GM10248 (cell line): ENCODE measurements at regions of chr10 and their contacts with region 1.

Region 1: GRCh38 chr10:73159038-73159648 is 8.7 kb downstream of the ECD start:
- DNase-seq: peak; percentile 60
- CTCF ChIP-seq: peak; percentile 66

Region 2: GRCh38 chr10:72935361-72935760 is 223.8 kb before region 1 on chr10:
- CTCF ChIA-PET with region 1: no interaction called
- POLR2A ChIA-PET with region 1: no interaction called
- DNase-seq: no peak
- CTCF ChIP-seq: no peak

Region 3: DNA sequence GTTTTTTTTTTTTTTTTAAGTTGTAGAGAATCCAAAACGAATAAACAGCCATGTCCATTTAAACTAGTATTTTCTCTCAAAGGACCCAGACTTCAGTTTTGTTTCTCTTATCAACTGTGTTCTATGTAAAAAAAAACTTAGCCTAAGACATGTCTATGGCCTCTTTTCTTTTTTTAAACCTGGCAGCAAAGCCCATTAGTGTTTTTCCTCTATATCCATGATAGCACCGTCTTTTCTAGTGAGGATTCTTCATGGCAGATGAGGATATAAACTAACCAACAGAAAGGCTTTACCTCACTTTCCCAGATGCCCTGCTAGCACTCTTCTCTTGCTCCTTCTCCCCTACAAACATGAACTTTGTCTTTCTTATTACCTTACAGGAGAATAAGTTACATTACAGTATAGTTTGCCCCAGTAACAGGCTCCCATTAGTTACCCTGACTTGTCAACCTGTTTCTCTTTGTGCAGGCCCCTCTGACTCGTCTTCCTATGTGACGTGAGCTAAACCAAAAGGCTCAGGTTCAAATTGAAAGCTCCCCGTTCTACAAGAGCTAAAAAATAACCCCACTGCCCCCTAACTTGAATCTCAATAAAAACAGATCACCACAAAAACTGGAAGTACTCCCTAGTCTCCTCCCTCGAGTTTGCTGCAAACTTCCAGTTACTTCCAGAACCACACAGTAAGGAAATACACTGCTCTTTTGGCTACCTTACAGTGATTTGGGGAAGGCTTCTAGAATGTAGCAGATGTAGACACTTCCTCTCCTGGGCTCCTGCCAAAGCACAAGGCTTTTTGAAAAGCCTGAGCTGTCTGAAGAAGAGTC is 82.6 kb before region 1 on chr10:
- CTCF ChIA-PET with region 1: interaction called, 15 read pairs
- POLR2A ChIA-PET with region 1: interaction called, 3 read pairs
- DNase-seq: no peak
- CTCF ChIP-seq: no peak

Region 4: DNA sequence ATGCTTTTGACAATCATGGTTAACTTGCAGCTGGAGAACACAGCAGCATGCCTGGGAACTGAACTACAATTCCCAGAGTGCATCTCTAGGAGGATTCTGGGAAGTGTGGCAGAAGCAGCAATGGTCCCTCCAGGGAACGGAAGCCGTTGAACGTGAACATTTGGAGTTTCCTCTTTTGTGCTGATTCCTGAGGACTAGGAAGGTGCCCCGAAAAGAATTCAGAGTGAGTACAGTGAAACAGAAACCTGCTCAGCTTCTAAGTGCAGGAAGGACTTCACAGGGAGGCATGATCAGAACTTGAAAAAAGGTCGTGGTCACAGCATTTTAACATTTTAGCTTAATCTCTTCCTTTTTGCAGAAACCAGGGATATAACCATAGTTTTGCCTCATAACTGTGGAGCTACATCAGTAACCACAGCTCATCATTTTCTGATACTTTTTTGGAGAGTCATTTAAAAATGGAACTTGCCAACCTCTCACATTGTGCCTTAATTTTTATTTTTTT is 48.7 kb before region 1 on chr10 and contains the start of gene NUDT13:
- CTCF ChIA-PET with region 1: interaction called, 10 read pairs
- POLR2A ChIA-PET with region 1: no interaction called
- DNase-seq: peak; percentile 68
- CTCF ChIP-seq: no peak

Region 5: GRCh38 chr10:73136627-73137026 is 22.5 kb before region 1 on chr10:
- CTCF ChIA-PET with region 1: interaction called, 13 read pairs
- POLR2A ChIA-PET with region 1: no interaction called
- DNase-seq: no peak
- CTCF ChIP-seq: no peak